ENCODE measurements at regions of chr11 and their contacts with region 1.

Region 1: DNA sequence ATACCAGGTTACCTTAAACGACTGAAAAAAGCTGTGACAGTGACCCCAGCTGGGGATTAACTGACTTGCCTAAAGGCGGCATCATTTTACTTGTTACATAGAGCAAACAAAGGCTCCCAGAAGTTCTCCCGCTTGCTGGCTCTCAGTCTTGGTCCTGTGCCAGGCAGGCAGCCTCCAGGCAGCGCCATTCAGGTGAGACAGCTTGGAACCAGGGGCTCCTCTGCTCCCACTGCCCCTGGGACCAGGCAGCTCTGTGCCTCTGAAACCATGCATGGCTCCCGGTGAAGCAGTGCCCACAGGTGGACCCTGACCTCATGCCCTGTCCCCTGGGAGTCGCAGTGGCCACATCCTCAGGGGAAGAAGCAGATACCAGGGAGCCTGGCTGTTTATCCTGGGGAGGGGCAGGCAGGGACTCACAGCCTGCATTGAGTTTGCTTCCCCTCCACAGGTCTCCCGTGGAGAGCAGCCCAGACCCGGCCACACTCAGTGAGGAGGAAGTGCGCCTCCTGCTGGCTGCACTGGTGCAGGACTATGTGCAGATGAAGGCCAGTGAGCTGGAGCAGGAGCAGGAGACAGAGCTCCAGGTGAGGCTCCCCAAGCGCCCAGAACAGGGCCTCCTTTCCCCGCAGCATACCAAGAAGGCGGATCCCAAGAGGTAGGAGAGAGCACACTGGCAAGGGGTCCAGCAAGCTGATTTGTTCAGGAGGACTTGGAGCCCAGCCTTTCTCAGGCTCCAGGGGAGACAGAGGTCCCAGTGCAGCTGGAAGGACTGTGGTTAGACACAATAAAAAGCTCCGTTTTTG is 15.6 kb upstream of the CYP2R1 start:
- DNase-seq: peak; percentile 73 to 90 (median 85)
- ATAC-seq: peak; percentile 51
- H3K4me3 ChIP-seq: no peak overlapping the region
- H3K4me3 Mint-ChIP-seq: no peak overlapping the region
- H3K27ac ChIP-seq: no peak overlapping the region
- H3K27ac Mint-ChIP-seq: no peak overlapping the region
- H3K4me1 ChIP-seq: peaks cover 16% of the 10 kb centered on the region
- H3K4me1 Mint-ChIP-seq: peaks cover 41% of the 10 kb centered on the region
- H3K27me3 ChIP-seq: no peaks in the 10 kb centered on the region
- H3K27me3 Mint-ChIP-seq: no peaks in the 10 kb centered on the region
- CTCF ChIP-seq: peak; percentile 82

Region 2: GRCh38 chr11:14300661-14301304 is 606.8 kb before region 1 on chr11:
- CTCF ChIA-PET with region 1: interaction called, 3 read pairs
- POLR2A ChIA-PET with region 1: no interaction called
- intact Hi-C with region 1: loop called in 1 of 2 experiments (anchors 1 kb)
- DNase-seq: peak; percentile 10 to 77 (median 44)
- ATAC-seq: peak; percentile 93
- H3K4me3 ChIP-seq: no peak overlapping the region
- H3K4me3 Mint-ChIP-seq: no peak overlapping the region
- H3K27ac ChIP-seq: no peak overlapping the region
- H3K27ac Mint-ChIP-seq: no peak overlapping the region
- H3K4me1 ChIP-seq: peaks cover 6% of the 10 kb centered on the region
- H3K4me1 Mint-ChIP-seq: peaks cover 22% of the 10 kb centered on the region
- H3K27me3 ChIP-seq: no peaks in the 10 kb centered on the region
- H3K27me3 Mint-ChIP-seq: no peaks in the 10 kb centered on the region
- CTCF ChIP-seq: peak; percentile 66

Region 3: DNA sequence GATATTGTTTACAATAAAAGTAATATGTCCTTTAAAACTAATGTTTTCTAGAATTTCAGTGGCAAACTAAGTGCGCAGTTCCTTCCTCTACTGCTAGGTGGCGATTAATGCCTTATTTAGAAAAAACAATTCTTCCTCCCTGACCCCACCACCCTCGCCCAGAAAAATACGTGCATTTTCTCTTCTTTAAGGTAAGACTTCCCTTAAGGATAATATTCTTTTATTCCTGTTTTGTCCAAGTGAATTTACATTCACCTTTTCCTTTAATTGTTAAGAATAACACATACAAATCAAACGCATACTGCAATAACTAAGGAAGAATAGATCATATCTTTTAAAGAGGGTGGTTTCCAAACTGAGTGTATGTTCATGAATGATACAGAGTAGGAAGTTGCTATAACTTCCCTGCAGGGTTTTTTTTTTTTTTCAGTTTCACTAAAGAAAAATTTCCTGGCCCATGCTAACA is 370.4 kb before region 1 on chr11:
- CTCF ChIA-PET with region 1: interaction called, 14 read pairs
- POLR2A ChIA-PET with region 1: no interaction called
- intact Hi-C with region 1: loop called (anchors 1 to 5 kb)
- DNase-seq: peak; percentile 19 to 76 (median 50)
- ATAC-seq: peak; percentile 85
- H3K4me3 ChIP-seq: no peak overlapping the region
- H3K4me3 Mint-ChIP-seq: peak overlapping the region; percentile 77
- H3K27ac ChIP-seq: peak overlapping the region in 1 of 2 experiments; percentile 25
- H3K27ac Mint-ChIP-seq: peak overlapping the region; percentile 87
- H3K4me1 ChIP-seq: peaks cover 15% of the 10 kb centered on the region
- H3K4me1 Mint-ChIP-seq: peaks cover 38% of the 10 kb centered on the region
- H3K27me3 ChIP-seq: no peaks in the 10 kb centered on the region
- H3K27me3 Mint-ChIP-seq: no peaks in the 10 kb centered on the region
- CTCF ChIP-seq: peak; percentile 92

Region 4: GRCh38 chr11:14643697-14644225 is 263.9 kb before region 1 on chr11 and contains the start of gene PDE3B:
- CTCF ChIA-PET with region 1: interaction called, 17 read pairs
- POLR2A ChIA-PET with region 1: interaction called, 3 read pairs
- intact Hi-C with region 1: loop called (anchors 2 to 5 kb)
- DNase-seq: peak; percentile 57 to 87 (median 74)
- ATAC-seq: peak; percentile 53
- H3K4me3 ChIP-seq: peak within 1 kb of the TSS; percentile 86 to 95
- H3K4me3 Mint-ChIP-seq: peak within 1 kb of the TSS; percentile 91
- H3K27ac ChIP-seq: peak within 1 kb of the TSS; percentile 66 to 86
- H3K27ac Mint-ChIP-seq: peak within 1 kb of the TSS; percentile 91
- H3K4me1 ChIP-seq: peaks cover 41% of the 10 kb centered on the region
- H3K4me1 Mint-ChIP-seq: peaks cover 54% of the 10 kb centered on the region
- H3K27me3 ChIP-seq: no peaks in the 10 kb centered on the region
- H3K27me3 Mint-ChIP-seq: no peaks in the 10 kb centered on the region
- CTCF ChIP-seq: no peak
- total RNA-seq, gene PDE3B: 144 to 146 TPM

Region 5: DNA sequence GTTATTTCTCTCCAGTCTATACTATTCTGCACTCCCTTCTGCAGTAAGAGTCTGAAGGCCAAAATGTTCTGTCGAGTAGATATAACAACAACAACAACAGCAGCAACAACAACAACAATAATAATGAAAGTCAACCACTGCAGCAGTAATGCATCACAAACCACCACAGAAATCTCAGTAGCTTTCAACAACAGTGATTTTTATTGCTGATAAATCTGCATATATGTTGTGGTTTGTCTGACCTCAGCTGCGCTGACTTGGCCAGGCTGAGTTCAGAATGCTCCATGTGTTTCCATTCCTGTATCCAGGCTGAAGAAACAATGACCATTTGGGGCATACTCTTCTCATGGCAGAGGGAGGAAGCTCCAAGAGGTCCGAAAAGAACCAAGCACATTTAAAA is 16.7 kb after region 1 on chr11:
- CTCF ChIA-PET with region 1: interaction called, 31 read pairs
- POLR2A ChIA-PET with region 1: no interaction called
- intact Hi-C with region 1: no loop called
- DNase-seq: no peak
- ATAC-seq: no peak
- H3K4me3 ChIP-seq: no peak overlapping the region
- H3K4me3 Mint-ChIP-seq: no peak overlapping the region
- H3K27ac ChIP-seq: no peak overlapping the region
- H3K27ac Mint-ChIP-seq: no peak overlapping the region
- H3K4me1 ChIP-seq: no peaks in the 10 kb centered on the region
- H3K4me1 Mint-ChIP-seq: no peaks in the 10 kb centered on the region
- H3K27me3 ChIP-seq: no peaks in the 10 kb centered on the region
- H3K27me3 Mint-ChIP-seq: no peaks in the 10 kb centered on the region
- CTCF ChIP-seq: no peak

Region 6: DNA sequence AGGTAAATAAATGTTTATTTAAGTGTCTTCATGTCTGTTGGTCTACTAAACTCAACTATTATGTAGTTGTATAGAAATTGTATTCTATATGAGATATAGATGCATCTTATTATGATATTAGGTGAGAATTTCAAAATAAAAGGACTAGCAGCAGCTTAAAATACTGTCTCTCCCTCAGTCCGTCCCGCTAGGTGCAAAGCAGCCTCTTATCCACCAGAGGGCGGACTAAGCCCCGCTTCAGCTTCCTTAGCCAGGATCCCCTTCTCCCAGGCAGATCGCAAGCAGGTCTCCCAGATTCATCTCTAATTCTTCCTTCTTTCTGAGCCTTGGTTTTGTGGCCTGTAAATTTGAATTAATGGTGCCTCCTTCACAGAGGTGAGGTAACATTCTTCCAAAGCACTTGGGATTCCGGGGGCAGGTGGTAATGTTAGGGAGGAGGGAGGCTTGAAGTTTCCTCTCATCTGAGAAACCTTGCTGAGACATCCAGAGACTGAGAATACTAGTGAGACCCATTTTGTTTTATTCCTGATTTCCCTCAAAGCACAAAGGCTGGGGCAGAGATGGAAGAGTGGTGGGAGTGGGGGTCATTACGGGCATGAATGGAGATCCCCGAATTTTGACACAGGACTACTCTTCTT is 193.6 kb after region 1 on chr11:
- CTCF ChIA-PET with region 1: interaction called, 11 read pairs
- POLR2A ChIA-PET with region 1: no interaction called
- intact Hi-C with region 1: no loop called
- DNase-seq: peak in 8 of 9 experiments; percentile 20 to 62 (median 49)
- ATAC-seq: peak; percentile 62
- H3K4me3 ChIP-seq: no peak overlapping the region
- H3K4me3 Mint-ChIP-seq: no peak overlapping the region
- H3K27ac ChIP-seq: no peak overlapping the region
- H3K27ac Mint-ChIP-seq: no peak overlapping the region
- H3K4me1 ChIP-seq: no peaks in the 10 kb centered on the region
- H3K4me1 Mint-ChIP-seq: peaks cover 2% of the 10 kb centered on the region
- H3K27me3 ChIP-seq: no peaks in the 10 kb centered on the region
- H3K27me3 Mint-ChIP-seq: peaks cover 20% of the 10 kb centered on the region
- CTCF ChIP-seq: peak; percentile 79

Measured in CD8-positive, alpha-beta T cell (primary cell).